ENCODE measurements at regions of chr1 and their contacts with region 1.

Region 1: GRCh38 chr1:210394281-210394821 is 65.6 kb downstream of the HHAT start:
- DNase-seq: peak in 3 of 5 donors; percentile 18 to 63 (median 52)
- ATAC-seq: peak; percentile 54 to 90 (median 77)
- H3K4me3 ChIP-seq: no peak overlapping the region
- H3K27ac ChIP-seq: peak overlapping the region in 8 of 12 donors; percentile 27 to 72 (median 45)
- H3K4me1 ChIP-seq: peaks cover 0 to 23% (median 0%) of the 10 kb centered on the region in 12 donors
- H3K27me3 ChIP-seq: no peaks in the 10 kb centered on the region
- CTCF ChIP-seq: no peak
- POLR2A ChIP-seq: no peak

Region 2: GRCh38 chr1:210143465-210144062 is 250.8 kb before region 1 on chr1:
- intact Hi-C with region 1: loop called in 1 of 10 experiments (anchors 5 kb)
- DNase-seq: peak; percentile 47 to 78 (median 61)
- ATAC-seq: peak in 1 of 4 donors; percentile 51
- H3K4me3 ChIP-seq: no peak overlapping the region
- H3K27ac ChIP-seq: no peak overlapping the region
- H3K4me1 ChIP-seq: no peaks in the 10 kb centered on the region
- H3K27me3 ChIP-seq: peaks cover 0 to 7% (median 0%) of the 10 kb centered on the region in 9 donors
- CTCF ChIP-seq: peak; percentile 55 to 80 (median 68)
- POLR2A ChIP-seq: no peak

Region 3: DNA sequence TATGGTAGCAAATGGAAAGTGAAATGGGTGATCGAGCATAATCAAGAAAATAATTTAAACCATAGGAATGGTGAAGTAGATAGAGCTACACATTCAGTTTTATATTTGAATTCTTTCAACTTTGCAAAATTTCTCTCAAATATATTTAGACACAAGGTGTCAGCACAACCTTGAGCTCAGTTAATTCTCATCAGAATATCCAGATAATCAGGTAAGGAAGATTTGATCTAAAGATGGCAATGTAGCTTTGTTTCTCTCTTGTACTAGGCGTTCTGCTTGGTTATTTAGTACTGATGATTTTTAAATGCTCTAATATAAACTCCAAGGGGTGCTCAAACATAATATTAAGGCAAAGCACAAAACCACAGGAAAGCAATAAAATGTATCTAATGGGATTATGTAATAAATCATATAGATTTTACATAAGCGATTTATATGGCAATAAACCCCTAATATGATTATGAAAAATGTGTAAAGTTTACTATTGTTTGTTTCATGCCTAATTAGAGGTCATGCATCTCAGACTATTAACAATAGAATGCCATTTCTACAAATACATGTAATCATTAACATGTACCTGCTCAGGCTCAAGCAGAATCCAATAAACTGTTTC is 194.1 kb before region 1 on chr1:
- intact Hi-C with region 1: no loop called
- DNase-seq: no peak
- ATAC-seq: no peak
- H3K4me3 ChIP-seq: no peak overlapping the region
- H3K27ac ChIP-seq: no peak overlapping the region
- H3K4me1 ChIP-seq: no peaks in the 10 kb centered on the region
- H3K27me3 ChIP-seq: peaks cover 0 to 4% (median 0%) of the 10 kb centered on the region in 9 donors
- CTCF ChIP-seq: peak in 8 of 12 donors; percentile 5 to 46 (median 24)
- POLR2A ChIP-seq: no peak

Region 4: DNA sequence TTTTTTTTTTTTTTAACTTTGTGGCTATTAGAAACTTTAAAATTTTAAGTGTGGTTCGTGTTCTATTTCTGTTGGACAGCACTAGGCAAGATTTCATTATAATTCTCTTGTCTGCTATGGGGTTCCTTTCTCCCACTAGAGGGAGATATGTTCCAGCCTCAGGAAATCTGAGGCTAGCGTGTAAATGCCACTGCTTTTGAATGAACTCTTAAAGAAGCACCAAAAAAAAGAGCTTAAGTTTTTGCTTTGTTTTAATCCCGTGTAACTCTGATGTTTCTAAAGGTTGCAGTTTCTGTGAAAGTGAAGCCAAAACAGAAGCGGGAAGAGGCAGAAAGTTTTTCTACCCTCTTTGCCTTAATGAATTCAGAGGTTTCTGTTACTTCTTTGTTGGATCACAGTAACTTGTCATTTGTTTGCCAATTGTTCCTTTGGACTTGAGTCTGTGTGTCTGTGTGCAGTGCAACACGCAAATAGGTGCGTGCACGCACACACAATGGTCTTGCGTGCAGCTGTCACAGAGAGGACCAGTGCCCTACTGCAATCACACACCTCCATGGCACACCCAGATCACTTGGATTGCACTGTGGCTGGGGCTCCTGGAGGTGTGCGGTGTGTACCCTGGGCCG is 33.4 kb before region 1 on chr1:
- intact Hi-C with region 1: loop called in 1 of 10 experiments (anchors 5 kb)
- DNase-seq: no peak
- ATAC-seq: peak in 3 of 4 donors; percentile 47 to 66 (median 64)
- H3K4me3 ChIP-seq: no peak overlapping the region
- H3K27ac ChIP-seq: no peak overlapping the region
- H3K4me1 ChIP-seq: peaks cover 0 to 26% (median 11%) of the 10 kb centered on the region in 12 donors
- H3K27me3 ChIP-seq: no peaks in the 10 kb centered on the region
- CTCF ChIP-seq: peak; percentile 40 to 73 (median 58)
- POLR2A ChIP-seq: no peak

Measured in heart left ventricle (tissue), 16 donors.